ENCODE measurements at regions of chr11 and their contacts with region 1.

Region 1: GRCh38 chr11:130861902-130862860 is 54.1 kb downstream of the SNX19 start:
- H3K4me3 ChIP-seq: no peak overlapping the region
- H3K27ac ChIP-seq: no peak overlapping the region
- H3K4me1 ChIP-seq: no peaks in the 10 kb centered on the region
- CTCF ChIP-seq: peak; percentile 96

Region 2: GRCh38 chr11:130434521-130435223 is 427.5 kb before region 1 on chr11:
- CTCF ChIA-PET with region 1: interaction called, 408 read pairs
- POLR2A ChIA-PET with region 1: interaction called, 3 read pairs
- H3K4me3 ChIP-seq: peak overlapping the region; percentile 38
- H3K27ac ChIP-seq: no peak overlapping the region
- H3K4me1 ChIP-seq: no peaks in the 10 kb centered on the region
- CTCF ChIP-seq: peak; percentile 76

Region 3: GRCh38 chr11:130636722-130637517 is 225.3 kb before region 1 on chr11:
- CTCF ChIA-PET with region 1: interaction called, 12 read pairs
- POLR2A ChIA-PET with region 1: no interaction called
- H3K4me3 ChIP-seq: no peak overlapping the region
- H3K27ac ChIP-seq: no peak overlapping the region
- H3K4me1 ChIP-seq: no peaks in the 10 kb centered on the region
- CTCF ChIP-seq: no peak

Region 4: DNA sequence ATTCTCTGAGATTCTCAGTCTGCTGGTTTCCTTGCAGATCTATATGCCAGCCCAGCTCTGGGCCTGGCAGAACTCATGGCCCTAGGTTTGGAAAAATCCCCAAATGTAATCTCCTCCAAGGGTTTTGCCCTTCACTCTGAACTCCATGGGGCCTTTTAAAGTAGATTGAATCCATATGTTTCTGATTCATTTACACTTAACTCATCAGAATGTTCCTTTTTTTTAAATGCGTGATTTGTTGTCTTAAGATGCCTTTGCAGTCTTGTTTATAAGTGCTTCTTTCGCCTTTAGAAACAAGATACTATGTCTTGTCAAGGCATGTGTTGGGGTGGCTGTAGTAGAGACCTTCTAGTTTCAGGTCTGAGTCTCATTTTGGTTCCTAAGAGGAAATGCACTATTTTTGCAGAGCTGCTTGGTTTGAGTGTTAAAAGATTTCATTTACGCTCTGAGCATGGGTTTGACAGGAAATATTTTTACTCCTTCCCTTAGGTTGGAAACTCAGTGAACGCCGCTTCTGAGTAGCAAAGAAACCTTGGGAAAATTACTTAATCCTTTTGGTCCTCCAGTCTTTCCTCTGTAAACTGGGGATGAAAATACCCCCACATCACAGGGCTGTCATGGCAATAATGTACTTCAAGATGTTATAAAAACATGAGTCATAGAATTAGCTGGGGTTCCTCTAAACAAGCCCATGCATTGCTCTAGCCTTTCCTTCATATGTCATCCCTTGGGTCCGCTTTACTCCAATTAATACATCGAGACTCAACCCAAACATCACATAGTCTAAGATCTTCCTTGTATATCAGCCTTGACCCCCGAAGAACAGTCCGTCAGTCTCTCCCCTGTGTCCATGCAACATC is 29.4 kb before region 1 on chr11:
- CTCF ChIA-PET with region 1: interaction called, 72 read pairs
- POLR2A ChIA-PET with region 1: no interaction called
- H3K4me3 ChIP-seq: no peak overlapping the region
- H3K27ac ChIP-seq: no peak overlapping the region
- H3K4me1 ChIP-seq: no peaks in the 10 kb centered on the region
- CTCF ChIP-seq: no peak

Region 5: DNA sequence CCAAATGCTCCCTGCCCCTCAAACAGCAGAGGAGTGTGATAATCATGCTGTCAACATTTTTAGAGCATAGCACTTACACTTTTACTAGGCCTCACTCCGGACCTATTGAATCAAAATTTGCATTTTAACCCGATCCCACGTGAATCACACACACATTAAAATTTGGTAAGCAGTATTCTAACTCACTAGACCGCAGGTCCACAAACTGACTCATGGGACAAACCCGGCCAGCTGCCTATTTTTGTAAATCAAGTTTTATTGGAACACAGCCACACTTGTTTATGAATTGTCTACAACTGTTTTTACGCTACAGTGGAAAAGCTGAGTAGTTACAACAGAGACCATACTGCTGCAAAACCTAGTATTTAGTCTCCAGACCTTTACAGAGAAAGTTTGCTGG is 10.8 kb after region 1 on chr11:
- CTCF ChIA-PET with region 1: interaction called, 12 read pairs
- POLR2A ChIA-PET with region 1: no interaction called
- H3K4me3 ChIP-seq: no peak overlapping the region
- H3K27ac ChIP-seq: no peak overlapping the region
- H3K4me1 ChIP-seq: no peaks in the 10 kb centered on the region
- CTCF ChIP-seq: no peak

Region 6: DNA sequence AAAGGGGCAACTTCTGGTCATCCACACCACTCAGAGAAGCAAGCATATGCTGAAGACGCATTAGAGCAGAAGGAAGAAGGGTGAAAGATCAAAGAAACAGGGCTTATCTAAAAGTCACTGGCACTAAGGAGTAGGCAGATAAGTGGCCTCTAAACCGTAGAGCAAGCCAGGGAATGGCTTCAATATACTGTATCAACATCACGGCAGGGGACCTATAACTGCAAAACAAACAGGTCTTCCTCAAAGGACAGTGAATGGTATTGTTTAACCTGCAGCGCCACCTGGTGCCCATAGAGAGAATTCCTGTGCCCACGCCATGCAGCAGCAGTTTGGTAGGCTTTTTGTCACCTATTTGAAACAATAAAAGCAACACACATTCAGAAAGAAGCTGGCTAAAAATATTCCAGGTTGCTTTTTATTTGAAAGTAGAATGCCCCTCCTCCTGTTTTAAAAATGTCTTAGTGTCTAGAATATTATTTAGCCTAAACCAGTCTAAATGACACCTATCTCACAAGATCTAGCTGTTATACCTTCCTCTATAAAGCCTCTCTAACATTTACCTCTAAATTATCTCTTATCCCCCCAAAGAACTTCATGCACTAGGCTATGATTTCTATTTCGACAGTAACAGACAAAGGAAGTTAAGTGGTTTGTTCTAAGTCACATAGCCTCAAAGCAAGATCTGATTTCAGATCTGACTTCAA is 32.3 kb after region 1 on chr11:
- CTCF ChIA-PET with region 1: interaction called, 59 read pairs
- POLR2A ChIA-PET with region 1: no interaction called
- H3K4me3 ChIP-seq: no peak overlapping the region
- H3K27ac ChIP-seq: no peak overlapping the region
- H3K4me1 ChIP-seq: 0 out of 2 replicates have a peak, but pooled peaks cover 2% of the 10 kb centered on the region
- CTCF ChIP-seq: 0 out of 2 replicates have a peak, but pooled peaks have one; percentile 48

Measured in HEK293 (cell line).